ENCODE measurements at regions of chr12 and their contacts with region 1.

Region 1: DNA sequence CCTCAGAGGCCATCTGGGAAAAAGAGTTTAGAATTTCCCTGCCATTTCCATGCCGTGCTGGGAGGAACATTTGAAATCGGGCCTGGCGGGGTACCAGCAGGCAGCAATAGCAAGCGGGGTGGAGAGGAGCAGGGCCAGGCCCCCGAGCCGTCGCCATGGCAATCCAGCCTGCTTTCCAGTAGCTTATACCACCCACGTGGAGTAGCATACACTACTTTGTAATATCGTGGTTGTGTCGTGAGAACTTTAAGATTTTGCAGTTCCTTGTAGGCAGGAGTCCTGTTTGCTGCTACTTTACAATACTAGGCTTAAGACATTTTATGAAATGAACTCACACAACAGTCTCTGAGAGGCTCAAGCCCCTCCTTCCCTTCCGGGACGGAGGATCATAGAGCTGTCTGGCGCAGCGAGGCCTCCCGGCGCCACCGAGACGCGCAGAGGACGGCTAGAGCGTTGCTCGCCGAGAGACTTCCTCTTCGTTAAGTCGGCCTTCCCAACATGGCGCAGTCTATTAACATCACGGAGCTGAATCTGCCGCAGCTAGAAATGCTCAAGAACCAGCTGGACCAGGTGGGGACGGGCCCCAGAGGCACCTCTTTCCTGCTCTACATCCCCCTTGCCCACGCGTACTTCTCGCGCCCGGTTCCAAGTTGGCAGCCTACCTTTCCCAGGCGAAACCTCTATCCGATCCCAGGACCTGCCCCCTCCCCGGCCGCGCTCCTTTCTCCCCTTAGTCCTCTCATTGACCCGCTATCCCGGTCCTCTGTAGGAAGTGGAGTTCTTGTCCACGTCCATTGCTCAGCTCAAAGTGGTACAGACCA is at the start of gene PFDN5:
- DNase-seq: peak; percentile 92
- ATAC-seq: peak; percentile 83
- H3K4me3 ChIP-seq: peak within 1 kb of the TSS; percentile 92
- H3K27ac ChIP-seq: peak within 1 kb of the TSS; percentile 95
- H3K4me1 ChIP-seq: peaks cover 20% of the 10 kb centered on the region
- H3K27me3 ChIP-seq: no peaks in the 10 kb centered on the region
- CTCF ChIP-seq: no peak
- POLR2A ChIP-seq: peak; percentile 92
- RAD21 ChIP-seq: no peak
- total RNA-seq, gene PFDN5: 764 and 1,011 TPM in 2 replicates

Region 2: DNA sequence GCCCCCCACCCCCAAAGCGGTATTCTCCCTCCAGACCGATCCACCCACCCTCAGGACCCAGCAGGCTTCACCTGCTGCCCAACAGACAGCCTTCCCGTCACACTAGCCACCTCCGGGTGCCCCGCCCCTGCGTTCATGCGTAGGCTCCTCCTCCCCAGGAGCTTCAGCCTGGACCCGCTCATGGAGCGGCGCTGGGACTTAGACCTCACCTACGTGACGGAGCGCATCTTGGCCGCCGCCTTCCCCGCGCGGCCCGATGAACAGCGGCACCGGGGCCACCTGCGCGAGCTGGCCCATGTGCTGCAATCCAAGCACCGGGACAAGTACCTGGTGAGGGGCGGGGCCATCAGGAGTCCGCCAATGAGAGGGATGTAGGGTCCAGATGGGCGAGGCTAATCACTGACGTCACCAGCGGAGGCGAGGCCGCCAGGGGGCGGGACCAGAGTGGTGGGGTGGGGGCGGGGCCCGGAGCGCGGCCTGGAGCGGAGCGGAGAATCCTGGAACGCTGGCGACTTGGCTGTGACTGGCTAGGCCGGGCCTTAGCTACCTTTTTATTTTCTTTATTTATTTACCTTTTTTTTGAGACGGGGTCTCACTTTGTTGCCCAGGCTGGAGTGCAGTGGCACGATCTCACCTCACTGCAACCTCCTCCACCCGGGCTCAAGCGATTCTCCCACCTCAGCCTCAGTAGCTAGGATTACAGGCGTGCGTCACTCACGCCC is 241.0 kb before region 1 on chr12:
- CTCF ChIA-PET with region 1: no interaction called
- POLR2A ChIA-PET with region 1: no interaction called
- dilution Hi-C with region 1: no loop called
- in situ Hi-C with region 1: no loop called
- intact Hi-C with region 1: loop called (anchors 5 kb)
- DNase-seq: peak; percentile 77
- ATAC-seq: peak; percentile 39
- H3K4me3 ChIP-seq: peak overlapping the region; percentile 35
- H3K27ac ChIP-seq: peak overlapping the region; percentile 20; the same call in 1 of the 2 replicates
- H3K4me1 ChIP-seq: peaks cover 38% of the 10 kb centered on the region
- H3K27me3 ChIP-seq: no peaks in the 10 kb centered on the region
- CTCF ChIP-seq: no peak
- POLR2A ChIP-seq: no peak
- RAD21 ChIP-seq: no peak